ENCODE measurements at regions of chr14 and their contacts with region 1.

Region 1: GRCh38 chr14:23054000-23054811 is 3.1 kb downstream of the CDH24 start:
- DNase-seq: no peak
- H3K4me3 ChIP-seq: no peak overlapping the region
- H3K27ac ChIP-seq: no peak overlapping the region
- H3K4me1 ChIP-seq: peaks cover 10% of the 10 kb centered on the region
- H3K27me3 ChIP-seq: no peaks in the 10 kb centered on the region

Region 2: DNA sequence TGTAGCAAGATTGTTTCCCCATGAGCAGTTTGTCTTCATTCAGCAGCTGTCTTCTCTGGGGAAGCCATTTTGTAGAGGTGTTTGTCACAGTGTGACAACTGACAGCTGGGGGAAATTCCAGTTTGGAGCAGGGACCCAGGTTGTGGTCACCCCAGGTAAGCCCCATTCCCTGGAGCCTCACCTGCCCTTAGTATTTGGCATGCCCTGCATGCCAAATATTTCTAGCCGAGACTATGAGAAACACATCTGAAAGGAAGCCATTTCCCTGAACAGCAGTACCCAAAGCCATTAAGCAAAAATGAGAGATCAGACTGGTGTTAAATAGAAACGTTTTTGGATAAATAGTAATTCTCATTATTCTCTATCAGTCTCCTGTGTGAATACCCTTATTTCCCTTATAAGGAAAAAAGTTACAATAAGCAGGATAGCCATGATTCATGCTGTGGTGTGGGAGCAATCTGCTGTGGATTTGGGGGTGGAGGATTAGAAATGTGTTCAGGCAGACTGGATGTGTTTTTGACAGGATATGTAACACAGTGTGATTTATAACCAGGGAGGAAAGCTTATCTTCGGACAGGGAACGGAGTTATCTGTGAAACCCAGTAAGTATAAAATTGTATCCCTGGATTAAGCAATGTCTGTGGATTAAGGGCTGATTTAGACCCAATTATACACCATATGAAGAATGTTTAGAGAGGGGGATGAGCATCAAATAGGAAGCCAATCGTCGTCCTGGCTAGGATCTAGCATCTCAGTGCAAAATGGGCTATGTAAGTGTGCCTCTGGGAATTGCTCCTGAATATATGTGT is 534.1 kb before region 1 on chr14:
- in situ Hi-C with region 1: no loop called
- DNase-seq: peak; percentile 61
- H3K4me3 ChIP-seq: no peak overlapping the region
- H3K27ac ChIP-seq: no peak overlapping the region
- H3K4me1 ChIP-seq: peaks cover 30% of the 10 kb centered on the region
- H3K27me3 ChIP-seq: no peaks in the 10 kb centered on the region

Region 3: GRCh38 chr14:22973217-22974032 is 80.8 kb before region 1 on chr14:
- in situ Hi-C with region 1: no loop called
- DNase-seq: peak; percentile 69
- H3K4me3 ChIP-seq: no peak overlapping the region
- H3K27ac ChIP-seq: no peak overlapping the region
- H3K4me1 ChIP-seq: peaks cover 21% of the 10 kb centered on the region
- H3K27me3 ChIP-seq: no peaks in the 10 kb centered on the region

Region 4: GRCh38 chr14:22994762-22995275 is 59.4 kb before region 1 on chr14:
- in situ Hi-C with region 1: loop called (anchors 5 kb)
- DNase-seq: peak; percentile 64
- H3K4me3 ChIP-seq: no peak overlapping the region
- H3K27ac ChIP-seq: peak overlapping the region; percentile 9; the same call in 1 of the 2 replicates
- H3K4me1 ChIP-seq: peaks cover 9% of the 10 kb centered on the region
- H3K27me3 ChIP-seq: no peaks in the 10 kb centered on the region

Measured in GM23248 (cell line).